ENCODE measurements at regions of chr17 and their contacts with region 1.

Region 1: GRCh38 chr17:79393358-79394202 is 217.3 kb downstream of the RBFOX3 start:
- DNase-seq: peak; percentile 45 to 76 (median 68)
- ATAC-seq: peak; percentile 79
- H3K4me3 ChIP-seq: no peak overlapping the region
- H3K4me3 Mint-ChIP-seq: no peak overlapping the region
- H3K27ac ChIP-seq: no peak overlapping the region
- H3K27ac Mint-ChIP-seq: no peak overlapping the region
- H3K4me1 ChIP-seq: peaks cover 3% of the 10 kb centered on the region
- H3K4me1 Mint-ChIP-seq: peaks cover 10% of the 10 kb centered on the region
- H3K27me3 ChIP-seq: peaks cover 3 to 15% of the 10 kb centered on the region in 2 experiments
- H3K27me3 Mint-ChIP-seq: peaks cover 56% of the 10 kb centered on the region
- CTCF ChIP-seq: peak; percentile 77

Region 2: GRCh38 chr17:78935379-78936323 is 457.9 kb before region 1 on chr17:
- CTCF ChIA-PET with region 1: no interaction called
- POLR2A ChIA-PET with region 1: no interaction called
- intact Hi-C with region 1: no loop called
- DNase-seq: no peak
- ATAC-seq: no peak
- H3K4me3 ChIP-seq: no peak overlapping the region
- H3K4me3 Mint-ChIP-seq: no peak overlapping the region
- H3K27ac ChIP-seq: no peak overlapping the region
- H3K27ac Mint-ChIP-seq: no peak overlapping the region
- H3K4me1 ChIP-seq: no peaks in the 10 kb centered on the region
- H3K4me1 Mint-ChIP-seq: peaks cover 5% of the 10 kb centered on the region
- H3K27me3 ChIP-seq: no peaks in the 10 kb centered on the region
- H3K27me3 Mint-ChIP-seq: peaks cover 3% of the 10 kb centered on the region
- CTCF ChIP-seq: no peak

Region 3: DNA sequence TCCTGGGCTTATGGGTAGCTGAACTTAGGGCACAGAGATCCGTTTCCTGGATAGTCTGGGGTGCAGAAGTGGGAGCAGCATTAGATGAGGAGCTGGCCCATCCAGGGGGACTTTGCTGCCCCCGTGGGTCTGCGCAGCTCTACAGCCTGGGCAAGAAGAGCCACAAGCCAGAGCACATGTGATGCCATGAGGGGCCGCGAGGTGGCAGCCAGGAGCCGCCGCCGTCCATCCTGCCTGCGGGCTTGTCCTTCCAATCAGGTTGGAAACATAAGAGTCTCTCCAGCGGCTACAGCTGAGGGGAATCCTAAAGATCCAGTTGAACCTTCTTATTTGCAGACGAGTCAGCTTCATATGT is 347.8 kb before region 1 on chr17:
- CTCF ChIA-PET with region 1: interaction called, 18 read pairs
- POLR2A ChIA-PET with region 1: no interaction called
- intact Hi-C with region 1: loop called (anchors 1 to 5 kb)
- DNase-seq: peak; percentile 41 to 72 (median 61)
- ATAC-seq: peak; percentile 87
- H3K4me3 ChIP-seq: no peak overlapping the region
- H3K4me3 Mint-ChIP-seq: no peak overlapping the region
- H3K27ac ChIP-seq: no peak overlapping the region
- H3K27ac Mint-ChIP-seq: no peak overlapping the region
- H3K4me1 ChIP-seq: no peaks in the 10 kb centered on the region
- H3K4me1 Mint-ChIP-seq: peaks cover 4% of the 10 kb centered on the region
- H3K27me3 ChIP-seq: peaks cover 0 to 5% of the 10 kb centered on the region in 2 experiments
- H3K27me3 Mint-ChIP-seq: peaks cover 16% of the 10 kb centered on the region
- CTCF ChIP-seq: peak; percentile 74

Region 4: DNA sequence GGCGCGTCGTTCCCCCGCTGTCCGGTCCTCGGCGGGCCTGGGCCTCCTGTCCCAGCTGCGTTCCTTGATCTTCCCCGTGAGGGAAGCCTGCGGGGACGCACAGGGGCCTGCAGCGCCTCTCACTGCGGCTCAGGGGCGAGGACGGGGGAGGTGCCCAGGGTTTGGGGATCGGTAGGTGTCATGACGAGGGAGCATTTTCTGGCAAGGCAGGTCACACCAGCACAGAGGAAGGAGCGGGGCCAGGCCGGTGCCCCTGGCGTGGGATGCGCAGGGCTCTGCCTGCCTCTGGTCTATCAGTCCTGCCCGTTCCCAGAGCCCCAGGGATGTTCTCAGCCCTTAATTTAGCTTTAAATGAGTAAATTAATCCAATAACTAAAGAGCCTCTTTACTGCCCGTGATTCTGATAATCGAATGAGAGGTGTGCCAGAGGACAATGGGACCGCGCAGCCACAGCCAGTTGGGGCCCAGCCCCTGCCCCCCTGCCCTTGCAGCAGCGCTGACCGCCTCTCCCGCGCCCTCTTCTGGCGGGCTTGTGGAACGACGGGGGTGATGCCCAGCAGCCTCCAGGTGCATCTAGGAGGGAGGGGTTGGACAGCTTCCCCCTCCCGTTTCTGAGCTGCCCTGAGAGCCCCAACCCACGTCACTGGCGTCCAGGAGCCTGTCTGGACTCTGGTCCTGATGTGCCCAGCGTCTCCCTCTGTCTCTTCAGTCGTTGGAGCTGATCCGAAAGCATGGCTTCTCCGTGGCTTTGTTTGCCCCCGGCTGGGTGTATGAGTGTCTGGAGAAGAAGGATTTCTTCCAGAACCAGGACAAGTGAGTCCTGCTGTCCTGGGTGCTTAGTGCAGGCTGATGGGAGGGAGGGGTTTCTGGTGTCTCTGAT is 311.0 kb before region 1 on chr17:
- CTCF ChIA-PET with region 1: interaction called, 33 read pairs
- POLR2A ChIA-PET with region 1: no interaction called
- intact Hi-C with region 1: loop called in 1 of 2 experiments (anchors 1 kb)
- DNase-seq: peak in 8 of 9 experiments; percentile 23 to 65 (median 56)
- ATAC-seq: peak; percentile 70
- H3K4me3 ChIP-seq: no peak overlapping the region
- H3K4me3 Mint-ChIP-seq: no peak overlapping the region
- H3K27ac ChIP-seq: no peak overlapping the region
- H3K27ac Mint-ChIP-seq: no peak overlapping the region
- H3K4me1 ChIP-seq: no peaks in the 10 kb centered on the region
- H3K4me1 Mint-ChIP-seq: peaks cover 2% of the 10 kb centered on the region
- H3K27me3 ChIP-seq: no peaks in the 10 kb centered on the region
- H3K27me3 Mint-ChIP-seq: no peaks in the 10 kb centered on the region
- CTCF ChIP-seq: peak; percentile 82

Region 5: DNA sequence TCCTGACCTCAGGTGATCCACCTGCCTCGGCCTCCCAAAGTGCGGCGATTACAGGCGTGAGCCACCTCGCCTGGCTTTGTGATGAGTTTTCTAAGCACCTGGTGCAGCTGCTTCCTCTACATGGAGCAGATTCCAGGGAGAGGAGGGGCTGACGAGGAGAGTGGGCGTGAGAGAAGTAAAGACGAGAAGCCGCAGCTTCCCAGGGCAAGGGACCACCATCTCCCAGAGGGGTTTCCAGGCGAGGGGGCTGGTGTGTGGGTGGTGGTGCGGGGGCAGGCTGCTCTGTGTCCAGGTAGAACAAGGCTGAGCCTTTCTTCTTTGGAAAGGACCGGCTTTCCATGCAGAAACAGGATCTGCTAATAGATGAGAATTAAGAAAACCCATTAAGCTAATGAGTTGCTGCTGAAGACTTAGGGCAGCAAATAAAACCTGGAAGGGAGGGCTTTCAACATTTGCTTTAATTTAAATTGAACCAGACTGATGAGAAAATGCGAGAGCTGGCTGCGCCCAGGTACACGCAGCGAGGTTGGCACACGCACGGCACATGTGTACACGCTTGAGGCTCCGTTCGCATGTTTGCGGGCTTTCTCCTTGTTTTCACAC is 19.4 kb before region 1 on chr17:
- CTCF ChIA-PET with region 1: interaction called, 16 read pairs
- POLR2A ChIA-PET with region 1: no interaction called
- intact Hi-C with region 1: no loop called
- DNase-seq: no peak
- ATAC-seq: no peak
- H3K4me3 ChIP-seq: no peak overlapping the region
- H3K4me3 Mint-ChIP-seq: no peak overlapping the region
- H3K27ac ChIP-seq: no peak overlapping the region
- H3K27ac Mint-ChIP-seq: no peak overlapping the region
- H3K4me1 ChIP-seq: no peaks in the 10 kb centered on the region
- H3K4me1 Mint-ChIP-seq: no peaks in the 10 kb centered on the region
- H3K27me3 ChIP-seq: no peaks in the 10 kb centered on the region
- H3K27me3 Mint-ChIP-seq: peaks cover 31% of the 10 kb centered on the region
- CTCF ChIP-seq: no peak

Region 6: DNA sequence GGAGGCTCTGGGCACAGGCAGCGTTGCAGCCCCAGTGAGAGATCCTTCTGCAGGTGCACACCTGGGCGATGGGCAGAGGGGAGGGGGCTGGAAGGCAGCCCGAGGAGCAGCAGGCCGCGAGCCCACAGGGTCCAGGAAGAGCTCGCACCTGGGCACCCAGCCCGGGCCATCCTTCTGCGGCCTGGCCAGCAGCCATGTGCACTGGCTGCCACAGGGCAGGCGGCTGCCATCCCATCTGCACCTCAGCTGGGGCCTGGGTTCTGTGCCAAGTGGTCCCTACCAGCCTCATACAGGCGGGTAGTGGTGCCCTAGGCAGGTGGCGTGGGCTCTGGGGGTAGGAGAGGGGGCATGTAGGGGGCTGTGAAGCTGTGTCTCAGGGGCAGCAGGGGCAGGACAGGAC is 20.0 kb after region 1 on chr17:
- CTCF ChIA-PET with region 1: interaction called, 85 read pairs
- POLR2A ChIA-PET with region 1: no interaction called
- intact Hi-C with region 1: no loop called
- DNase-seq: no peak
- ATAC-seq: no peak
- H3K4me3 ChIP-seq: no peak overlapping the region
- H3K4me3 Mint-ChIP-seq: no peak overlapping the region
- H3K27ac ChIP-seq: no peak overlapping the region
- H3K27ac Mint-ChIP-seq: no peak overlapping the region
- H3K4me1 ChIP-seq: no peaks in the 10 kb centered on the region
- H3K4me1 Mint-ChIP-seq: no peaks in the 10 kb centered on the region
- H3K27me3 ChIP-seq: peaks cover 0 to 5% of the 10 kb centered on the region in 2 experiments
- H3K27me3 Mint-ChIP-seq: peaks cover 15% of the 10 kb centered on the region
- CTCF ChIP-seq: no peak

Region 7: GRCh38 chr17:79630821-79631639 is 237.4 kb after region 1 on chr17:
- CTCF ChIA-PET with region 1: no interaction called
- POLR2A ChIA-PET with region 1: no interaction called
- intact Hi-C with region 1: no loop called
- DNase-seq: peak in 1 of 9 experiments; percentile 37
- ATAC-seq: no peak
- H3K4me3 ChIP-seq: no peak overlapping the region
- H3K4me3 Mint-ChIP-seq: no peak overlapping the region
- H3K27ac ChIP-seq: no peak overlapping the region
- H3K27ac Mint-ChIP-seq: no peak overlapping the region
- H3K4me1 ChIP-seq: no peaks in the 10 kb centered on the region
- H3K4me1 Mint-ChIP-seq: no peaks in the 10 kb centered on the region
- H3K27me3 ChIP-seq: no peaks in the 10 kb centered on the region
- H3K27me3 Mint-ChIP-seq: peaks cover 37% of the 10 kb centered on the region
- CTCF ChIP-seq: no peak